Testis (tissue), 5 donors: ENCODE measurements at regions of chr2 and their contacts with region 1.

Region 1: GRCh38 chr2:26144953-26145680 is 27.8 kb upstream of the GAREM2 start:
- DNase-seq: peak; percentile 71
- H3K4me3 ChIP-seq: no peak overlapping the region
- H3K27ac ChIP-seq: no peak overlapping the region
- H3K4me1 ChIP-seq: no peaks in the 10 kb centered on the region
- H3K27me3 ChIP-seq: no peaks in the 10 kb centered on the region
- CTCF ChIP-seq: peak; percentile 54 to 75 (median 64)
- POLR2A ChIP-seq: no peak

Region 2: DNA sequence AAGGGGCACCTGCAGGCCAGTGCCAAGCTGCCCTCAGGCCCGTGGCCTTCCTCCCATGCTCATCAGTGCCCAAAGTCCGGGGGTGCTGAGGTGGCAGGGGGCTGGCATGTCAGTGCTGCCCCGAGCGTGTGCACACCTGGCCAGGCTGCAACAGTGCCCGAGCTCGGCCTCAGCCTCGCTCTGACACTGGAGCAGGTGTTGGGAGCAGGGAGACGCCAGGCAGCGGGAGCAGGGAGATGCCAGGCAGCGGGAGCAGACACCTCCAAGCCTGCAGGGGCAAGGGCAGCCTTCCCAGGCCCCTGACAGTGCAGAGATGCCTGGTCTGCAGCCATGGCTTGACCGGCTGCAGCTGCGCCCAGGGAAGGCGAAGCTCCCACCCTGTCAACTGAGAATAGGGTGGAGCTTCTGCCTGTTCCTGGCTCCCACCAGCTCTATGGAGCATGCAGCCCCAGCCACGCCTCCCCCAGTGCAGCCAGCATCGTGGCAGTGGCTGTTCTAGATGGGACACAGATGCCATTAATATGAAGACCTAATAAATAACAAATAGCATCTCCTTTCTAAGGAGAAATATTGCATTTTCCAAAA is 554.1 kb before region 1 on chr2:
- intact Hi-C with region 1: no loop called
- DNase-seq: no peak
- H3K4me3 ChIP-seq: no peak overlapping the region
- H3K27ac ChIP-seq: no peak overlapping the region
- H3K4me1 ChIP-seq: no peaks in the 10 kb centered on the region
- H3K27me3 ChIP-seq: no peaks in the 10 kb centered on the region
- CTCF ChIP-seq: no peak
- POLR2A ChIP-seq: no peak

Region 3: DNA sequence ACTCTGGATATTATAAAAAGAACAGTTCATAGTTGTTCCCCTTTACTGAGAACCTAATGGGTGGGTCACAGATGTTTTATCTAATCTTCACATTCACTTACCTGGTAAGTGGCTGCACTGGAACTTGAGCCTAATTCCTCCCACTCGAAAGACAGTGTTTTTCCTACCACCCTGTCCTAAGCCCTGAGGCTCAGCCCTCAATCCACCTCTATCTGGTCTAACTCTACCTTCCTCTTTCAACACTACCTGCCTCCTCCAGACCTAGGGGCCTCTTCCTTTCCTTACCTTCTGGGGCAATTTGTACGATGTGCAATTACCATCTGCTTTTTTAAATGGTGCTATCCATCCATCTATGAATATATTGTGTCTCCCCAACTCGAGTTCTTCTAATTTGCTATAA is 153.2 kb before region 1 on chr2:
- intact Hi-C with region 1: loop called (anchors 10 kb)
- DNase-seq: no peak
- H3K4me3 ChIP-seq: no peak overlapping the region
- H3K27ac ChIP-seq: no peak overlapping the region
- H3K4me1 ChIP-seq: no peaks in the 10 kb centered on the region
- H3K27me3 ChIP-seq: no peaks in the 10 kb centered on the region
- CTCF ChIP-seq: no peak
- POLR2A ChIP-seq: no peak